ENCODE measurements at regions of chr20 and their contacts with region 1.

Region 1: GRCh38 chr20:14055127-14055742 is 59.9 kb downstream of the MACROD2 start:
- DNase-seq: peak; percentile 19
- H3K4me3 Mint-ChIP-seq: no peak overlapping the region
- H3K27ac Mint-ChIP-seq: no peak overlapping the region
- H3K4me1 Mint-ChIP-seq: no peaks in the 10 kb centered on the region
- H3K27me3 Mint-ChIP-seq: no peaks in the 10 kb centered on the region
- CTCF ChIP-seq: no peak

Region 2: GRCh38 chr20:13784893-13785715 is 270.1 kb before region 1 on chr20 and contains the starts of genes ESF1 and NDUFAF5:
- CTCF ChIA-PET with region 1: no interaction called
- intact Hi-C with region 1: no loop called
- DNase-seq: peak; percentile 84
- H3K4me3 Mint-ChIP-seq: peak within 1 kb of the TSS; percentile 98
- H3K27ac Mint-ChIP-seq: peak within 1 kb of the TSS; percentile 98
- H3K4me1 Mint-ChIP-seq: peaks cover 20% of the 10 kb centered on the region
- H3K27me3 Mint-ChIP-seq: no peaks in the 10 kb centered on the region
- CTCF ChIP-seq: no peak
- total RNA-seq, gene ESF1: 14.7 and 15.1 TPM in 2 replicates
- total RNA-seq, gene NDUFAF5: 12.8 and 16.3 TPM in 2 replicates

Region 3: DNA sequence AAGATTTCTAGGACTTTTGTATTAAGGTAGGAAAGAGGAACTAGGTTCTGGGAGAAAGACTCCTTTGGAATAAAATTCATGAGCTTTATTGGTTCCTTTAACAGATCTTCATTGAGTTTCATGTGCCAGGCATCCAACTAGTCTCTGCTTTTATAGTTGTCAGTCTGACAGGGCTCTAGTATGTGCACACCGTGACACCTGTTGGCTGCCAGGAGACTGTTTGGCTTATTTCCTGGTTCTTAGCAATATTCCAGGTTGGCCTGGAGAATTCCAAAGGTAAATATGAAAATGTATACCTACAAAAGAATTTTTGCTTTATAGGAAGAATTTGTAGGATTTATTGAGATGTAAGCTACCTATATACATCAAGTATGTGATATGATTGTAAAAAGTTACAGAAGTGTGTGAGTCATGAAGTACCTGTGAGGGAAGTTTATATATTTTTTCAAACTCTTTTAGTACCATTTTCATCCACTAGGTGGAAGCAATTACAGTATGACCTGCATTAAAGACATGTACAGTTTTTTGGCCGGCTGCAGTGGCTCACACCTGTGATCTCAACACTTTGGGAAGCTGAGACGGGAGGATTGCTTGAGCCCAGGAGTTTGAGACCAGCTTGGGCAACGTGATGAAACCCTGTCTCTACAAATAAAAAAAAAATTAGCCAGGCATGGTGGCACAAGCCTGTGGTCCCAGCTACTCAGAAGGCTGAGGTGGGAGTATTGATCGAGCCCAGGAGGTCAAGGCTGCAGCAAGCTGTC is 235.2 kb before region 1 on chr20:
- CTCF ChIA-PET with region 1: no interaction called
- intact Hi-C with region 1: loop called (anchors 1 kb)
- DNase-seq: peak; percentile 12
- H3K4me3 Mint-ChIP-seq: no peak overlapping the region
- H3K27ac Mint-ChIP-seq: no peak overlapping the region
- H3K4me1 Mint-ChIP-seq: no peaks in the 10 kb centered on the region
- H3K27me3 Mint-ChIP-seq: no peaks in the 10 kb centered on the region
- CTCF ChIP-seq: peak; percentile 43

Region 4: GRCh38 chr20:13898011-13898612 is 157.1 kb before region 1 on chr20:
- CTCF ChIA-PET with region 1: interaction called, 7 read pairs
- intact Hi-C with region 1: loop called (anchors 1 kb)
- DNase-seq: peak; percentile 8
- H3K4me3 Mint-ChIP-seq: no peak overlapping the region
- H3K27ac Mint-ChIP-seq: no peak overlapping the region
- H3K4me1 Mint-ChIP-seq: no peaks in the 10 kb centered on the region
- H3K27me3 Mint-ChIP-seq: no peaks in the 10 kb centered on the region
- CTCF ChIP-seq: peak; percentile 38

Region 5: DNA sequence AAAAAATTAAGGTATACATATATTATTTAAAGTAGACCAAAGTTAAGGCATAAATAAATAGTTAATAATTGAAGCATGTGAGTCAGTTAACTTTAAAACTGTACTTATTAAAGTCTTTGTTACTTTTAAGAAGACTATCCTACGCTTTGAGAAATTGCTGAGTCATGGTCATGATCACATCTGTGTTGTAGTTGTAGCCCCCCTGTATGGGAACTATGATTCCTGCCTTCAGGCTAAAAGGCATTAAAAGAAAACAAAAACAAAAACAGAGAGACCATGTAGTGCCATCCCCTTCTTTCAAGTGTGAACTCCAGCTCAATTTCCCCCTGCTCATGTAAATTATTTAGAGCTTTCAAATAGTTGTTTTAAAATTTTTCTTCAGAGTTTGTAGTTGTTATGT is 158.8 kb after region 1 on chr20:
- CTCF ChIA-PET with region 1: no interaction called
- intact Hi-C with region 1: no loop called
- DNase-seq: no peak
- H3K4me3 Mint-ChIP-seq: no peak overlapping the region
- H3K27ac Mint-ChIP-seq: no peak overlapping the region
- H3K4me1 Mint-ChIP-seq: no peaks in the 10 kb centered on the region
- H3K27me3 Mint-ChIP-seq: no peaks in the 10 kb centered on the region
- CTCF ChIP-seq: no peak